Keratinocyte (primary cell): ENCODE measurements at regions of chr6 and their contacts with region 1.

Region 1: GRCh38 chr6:72425003-72425681 is 196.7 kb upstream of the KCNQ5 start:
- DNase-seq: peak; percentile 45
- H3K4me3 ChIP-seq: peak overlapping the region in 1 of 3 experiments; percentile 48
- H3K27ac ChIP-seq: peak overlapping the region; percentile 10
- H3K4me1 ChIP-seq: peaks cover 41% of the 10 kb centered on the region
- H3K27me3 ChIP-seq: no peaks in the 10 kb centered on the region
- CTCF ChIP-seq: no peak

Region 2: DNA sequence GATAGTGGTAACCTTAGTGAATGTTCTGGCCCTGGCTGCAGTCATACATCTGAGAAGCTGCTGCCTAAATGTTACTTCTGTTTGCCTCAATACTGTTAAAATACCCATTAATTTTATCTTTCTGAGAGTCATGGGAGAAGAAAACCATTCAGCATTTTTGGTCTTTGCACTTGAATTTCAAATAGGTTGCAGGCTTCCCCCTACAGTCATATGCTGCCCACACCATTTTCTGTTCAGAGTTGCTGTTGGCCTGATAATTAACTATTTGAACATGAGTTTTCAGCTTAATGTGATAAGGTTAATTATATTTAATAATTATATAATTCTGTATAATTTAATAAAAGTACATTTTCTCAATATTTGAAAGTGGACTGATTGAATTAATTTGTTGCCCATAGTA is 128.8 kb before region 1 on chr6:
- dilution Hi-C with region 1: no loop called
- DNase-seq: no peak
- H3K4me3 ChIP-seq: no peak overlapping the region
- H3K27ac ChIP-seq: no peak overlapping the region
- H3K4me1 ChIP-seq: no peaks in the 10 kb centered on the region
- H3K27me3 ChIP-seq: peaks cover 12% of the 10 kb centered on the region
- CTCF ChIP-seq: no peak

Region 3: DNA sequence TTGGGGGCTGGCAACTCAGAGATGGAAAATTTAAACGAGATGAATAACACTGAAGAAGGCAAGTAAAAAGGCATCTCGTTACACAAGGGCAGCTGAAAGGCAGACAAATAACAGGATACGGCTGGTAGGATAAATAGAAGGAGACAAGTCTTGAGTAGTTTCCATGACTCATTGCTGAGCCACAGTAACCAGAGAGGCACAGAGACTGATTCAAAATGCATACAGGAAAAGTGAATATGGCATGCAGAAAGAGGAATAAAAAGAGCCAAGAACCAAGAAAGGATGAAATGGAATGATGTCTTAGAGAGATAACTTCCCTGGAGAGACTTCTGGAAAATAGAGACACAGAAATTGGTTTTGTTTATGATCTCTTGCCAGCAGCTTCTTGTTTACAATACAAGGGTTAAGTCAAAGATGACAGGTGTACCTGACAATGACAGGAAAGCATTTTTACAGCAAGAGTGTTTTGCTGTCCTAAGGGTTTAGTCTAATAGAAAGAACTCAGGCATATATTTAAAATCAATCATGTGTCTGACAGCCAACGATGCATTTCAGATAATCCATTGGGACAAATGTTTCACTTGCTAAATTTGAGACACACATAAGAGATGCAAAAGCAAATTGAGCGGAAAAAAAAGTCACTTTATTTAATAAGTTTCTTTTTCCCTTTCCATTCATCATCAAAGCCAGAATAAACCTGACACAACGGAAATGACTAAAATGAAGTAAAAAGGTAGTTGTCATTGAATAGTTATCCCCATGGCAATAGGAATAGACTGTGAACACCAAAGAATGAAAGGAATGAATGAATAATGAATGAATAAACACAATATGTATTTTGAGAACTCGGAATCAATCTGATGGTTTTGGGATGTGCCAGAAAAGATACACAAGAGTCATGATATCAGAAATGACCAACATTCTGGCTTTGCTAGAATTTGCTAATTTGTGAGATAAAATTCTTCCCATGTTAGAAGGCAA is 128.7 kb after region 1 on chr6:
- dilution Hi-C with region 1: loop called (anchors 25 kb)
- DNase-seq: peak; percentile 78
- H3K4me3 ChIP-seq: peak overlapping the region in 2 of 3 experiments; percentile 54 to 56
- H3K27ac ChIP-seq: peak overlapping the region; percentile 88
- H3K4me1 ChIP-seq: peaks cover 41% of the 10 kb centered on the region
- H3K27me3 ChIP-seq: no peaks in the 10 kb centered on the region
- CTCF ChIP-seq: no peak